Panc1 (cell line): ENCODE measurements at regions of chr17 and their contacts with region 1.

Region 1: GRCh38 chr17:50087246-50087911 is 7.8 kb upstream of the PDK2 start:
- DNase-seq: no peak
- ATAC-seq: peak; percentile 78
- H3K4me3 ChIP-seq: no peak overlapping the region
- H3K27ac ChIP-seq: no peak overlapping the region; the same call in 1 of the 2 replicates
- H3K4me1 ChIP-seq: peaks cover 14% of the 10 kb centered on the region; the same call in 1 of the 2 replicates
- H3K27me3 ChIP-seq: no peaks in the 10 kb centered on the region
- CTCF ChIP-seq: peak; percentile 96

Region 2: GRCh38 chr17:49763735-49764558 is 323.4 kb before region 1 on chr17 and contains the start of gene FAM117A:
- CTCF ChIA-PET with region 1: no interaction called
- POLR2A ChIA-PET with region 1: no interaction called
- in situ Hi-C with region 1: no loop called
- intact Hi-C with region 1: no loop called
- DNase-seq: peak; percentile 67
- ATAC-seq: peak; percentile 98
- H3K4me3 ChIP-seq: peak within 1 kb of the TSS; percentile 64 to 69
- H3K27ac ChIP-seq: peak within 1 kb of the TSS; percentile 58
- H3K4me1 ChIP-seq: peaks cover 11% of the 10 kb centered on the region
- H3K27me3 ChIP-seq: peaks cover 21% of the 10 kb centered on the region; the same call in 1 of the 2 replicates
- CTCF ChIP-seq: no peak
- total RNA-seq, gene FAM117A: 8.0 TPM

Region 3: GRCh38 chr17:50026901-50027630 is 60.3 kb before region 1 on chr17:
- CTCF ChIA-PET with region 1: no interaction called
- POLR2A ChIA-PET with region 1: interaction called, 6 read pairs
- in situ Hi-C with region 1: no loop called
- intact Hi-C with region 1: loop called (anchors 1 kb)
- DNase-seq: no peak
- ATAC-seq: peak; percentile 64
- H3K4me3 ChIP-seq: peak overlapping the region; percentile 33 to 56
- H3K27ac ChIP-seq: peak overlapping the region; percentile 91
- H3K4me1 ChIP-seq: peaks cover 34% of the 10 kb centered on the region
- H3K27me3 ChIP-seq: no peaks in the 10 kb centered on the region
- CTCF ChIP-seq: peak; percentile 96

Region 4: DNA sequence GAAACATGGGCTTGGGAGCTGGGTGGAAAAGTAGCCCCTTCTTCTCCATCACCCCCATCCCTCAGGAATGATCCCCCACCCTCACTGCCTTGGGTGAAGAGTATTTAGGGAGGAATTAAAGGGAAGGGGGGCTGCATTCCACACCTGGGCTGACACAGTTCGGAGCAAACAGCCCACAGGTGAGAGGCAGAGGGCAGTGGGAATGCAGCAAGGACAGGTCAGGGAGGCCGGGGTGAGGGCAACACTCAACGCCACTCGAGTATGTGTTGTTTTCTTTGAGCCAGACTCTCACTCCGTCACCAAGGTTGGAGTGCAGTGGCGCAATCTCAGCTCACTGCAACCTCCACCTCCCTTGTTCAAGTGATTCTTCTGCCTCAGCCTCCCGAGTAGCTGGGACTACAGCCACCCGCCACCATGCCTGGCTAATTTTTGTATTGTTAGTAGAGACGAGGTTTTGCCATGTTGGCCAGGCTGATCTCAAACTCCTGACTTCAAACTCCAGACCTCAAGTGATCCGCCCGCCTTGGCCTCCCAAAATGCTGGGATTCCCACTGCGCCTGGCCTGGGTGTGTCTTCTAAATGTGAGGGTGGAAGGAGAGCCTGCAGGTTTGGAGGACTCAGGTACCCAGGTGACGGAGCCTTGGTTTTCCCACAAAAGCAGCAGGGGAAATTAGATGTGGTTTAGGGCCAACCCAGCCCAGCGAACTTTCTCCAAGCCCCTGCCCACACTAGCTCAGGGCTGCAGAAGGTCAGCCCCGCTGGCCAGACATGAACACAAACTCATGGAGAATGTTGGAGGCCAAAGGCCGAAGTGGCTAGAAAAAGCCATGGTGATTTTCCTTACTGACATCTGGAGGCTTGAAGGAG is 52.6 kb before region 1 on chr17:
- CTCF ChIA-PET with region 1: no interaction called
- POLR2A ChIA-PET with region 1: interaction called, 10 read pairs
- in situ Hi-C with region 1: no loop called
- intact Hi-C with region 1: no loop called
- DNase-seq: no peak
- ATAC-seq: no peak
- H3K4me3 ChIP-seq: no peak overlapping the region
- H3K27ac ChIP-seq: peak overlapping the region; percentile 31
- H3K4me1 ChIP-seq: peaks cover 36% of the 10 kb centered on the region
- H3K27me3 ChIP-seq: no peaks in the 10 kb centered on the region
- CTCF ChIP-seq: no peak